ENCODE measurements at regions of chr11 and their contacts with region 1.

Region 1: GRCh38 chr11:4385978-4386740 is 7.3 kb downstream of the TRIM21 start:
- DNase-seq: no peak
- H3K4me3 ChIP-seq: no peak overlapping the region
- H3K27ac ChIP-seq: no peak overlapping the region
- H3K4me1 ChIP-seq: no peaks in the 10 kb centered on the region
- H3K27me3 ChIP-seq: no peaks in the 10 kb centered on the region
- CTCF ChIP-seq: no peak
- EP300 ChIP-seq: no peak
- POLR2A ChIP-seq: no peak

Region 2: DNA sequence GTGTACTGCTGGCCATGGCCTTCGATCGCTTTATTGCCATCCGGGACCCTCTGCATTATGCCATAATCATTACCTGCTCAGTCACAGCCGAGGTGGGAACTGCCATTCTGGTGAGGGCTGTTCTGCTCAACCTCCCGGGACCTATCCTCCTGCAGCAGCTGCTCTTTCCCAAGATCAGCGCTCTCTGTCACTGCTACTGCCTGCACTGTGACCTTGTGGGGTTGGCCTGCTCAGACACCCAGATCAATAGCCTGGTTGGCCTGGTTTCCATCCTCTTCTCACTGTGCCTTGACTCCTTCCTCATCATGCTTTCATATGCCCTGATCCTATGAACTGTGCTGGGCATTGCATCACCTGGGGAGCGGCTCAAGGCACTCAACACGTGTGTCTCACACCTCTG is 32.2 kb after region 1 on chr11:
- in situ Hi-C with region 1: no loop called
- intact Hi-C with region 1: loop called (anchors 1 kb)
- DNase-seq: no peak
- H3K4me3 ChIP-seq: no peak overlapping the region
- H3K27ac ChIP-seq: no peak overlapping the region
- H3K4me1 ChIP-seq: no peaks in the 10 kb centered on the region
- H3K27me3 ChIP-seq: no peaks in the 10 kb centered on the region
- CTCF ChIP-seq: no peak
- EP300 ChIP-seq: no peak
- POLR2A ChIP-seq: no peak

Region 3: GRCh38 chr11:4839851-4840549 is 453.8 kb after region 1 on chr11:
- in situ Hi-C with region 1: no loop called
- intact Hi-C with region 1: no loop called
- DNase-seq: no peak
- H3K4me3 ChIP-seq: no peak overlapping the region
- H3K27ac ChIP-seq: no peak overlapping the region
- H3K4me1 ChIP-seq: no peaks in the 10 kb centered on the region
- H3K27me3 ChIP-seq: no peaks in the 10 kb centered on the region
- CTCF ChIP-seq: no peak
- EP300 ChIP-seq: no peak
- POLR2A ChIP-seq: no peak

Measured in transverse colon (tissue), 4 donors.